Lower leg skin (tissue), 4 donors: ENCODE measurements at regions of chr6 and their contacts with region 1.

Region 1: DNA sequence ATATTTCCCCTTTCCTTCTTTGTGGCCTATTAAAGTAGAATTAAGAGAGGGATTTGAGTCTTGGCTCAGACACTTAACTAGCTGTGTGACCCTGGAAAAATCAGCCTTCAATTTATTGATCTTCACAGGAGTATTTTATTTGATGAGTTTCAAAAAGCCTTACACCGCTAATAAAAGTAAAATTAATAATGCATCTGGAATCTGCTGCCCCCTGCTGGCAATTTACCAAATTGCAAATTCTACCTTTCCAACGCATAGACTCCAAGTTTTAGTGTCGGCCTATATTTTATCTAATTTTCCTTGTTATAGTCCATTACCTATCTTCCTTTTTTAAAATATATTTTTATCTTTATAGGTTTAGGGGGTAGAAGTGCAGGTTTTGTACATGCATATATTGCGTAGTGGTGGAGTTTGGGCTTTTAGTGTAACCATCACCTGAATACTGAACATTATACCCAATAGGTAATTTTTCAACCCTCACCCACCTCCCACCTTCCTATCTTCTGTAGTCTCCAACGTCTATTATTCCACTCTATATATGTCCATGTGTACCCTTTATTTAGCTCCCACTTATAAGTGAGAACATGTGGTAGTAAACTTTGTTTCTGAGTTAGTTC is 46.3 kb downstream of the GOPC start:
- DNase-seq: peak; percentile 59 to 89
- H3K4me3 ChIP-seq: no peak overlapping the region
- CTCF ChIP-seq: peak in 1 of 3 donors; percentile 74
- POLR2A ChIP-seq: no peak

Region 2: DNA sequence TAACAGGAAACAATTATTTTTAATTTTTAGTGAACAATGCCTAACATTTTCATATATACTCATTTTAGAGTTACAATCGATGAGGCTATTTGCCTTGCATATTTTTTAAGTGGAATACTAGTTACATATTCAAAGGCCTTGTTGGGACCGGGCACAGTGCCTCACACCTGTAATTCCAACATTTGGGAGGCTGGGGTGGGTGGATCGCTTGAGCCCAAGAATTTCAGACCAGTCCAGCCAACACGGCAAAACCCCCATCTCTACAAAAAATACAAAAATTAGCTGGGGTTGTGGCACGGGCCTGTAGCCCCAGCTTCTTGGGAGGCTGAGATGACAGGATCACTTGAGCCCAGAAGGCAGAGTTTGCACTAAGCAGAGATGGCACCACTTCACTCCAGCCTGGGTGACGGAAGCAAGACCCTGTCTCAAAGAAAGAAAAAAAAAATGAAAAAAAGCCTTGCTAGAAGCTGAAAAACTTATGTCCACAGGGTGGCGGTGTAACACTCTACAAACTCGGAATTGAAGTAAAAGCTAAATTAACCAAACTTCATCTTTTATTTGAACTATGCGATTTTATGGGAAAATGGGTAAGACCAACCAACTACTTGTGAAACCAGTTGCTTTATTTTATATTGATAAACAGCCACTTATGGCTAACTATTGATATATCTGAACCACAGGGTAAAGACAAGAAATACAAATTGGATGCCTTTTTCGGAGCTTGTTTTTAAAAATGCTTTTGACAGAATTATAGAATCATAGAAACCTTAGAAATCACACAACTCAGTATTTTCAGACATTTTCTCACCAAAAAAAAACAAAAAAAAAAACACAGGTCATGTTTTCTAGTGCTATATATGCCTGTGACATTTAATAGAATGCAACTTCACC is 106.2 kb before region 1 on chr6:
- intact Hi-C with region 1: loop called (anchors 5 kb)
- DNase-seq: peak in 1 of 2 donors; percentile 28
- H3K4me3 ChIP-seq: no peak overlapping the region
- CTCF ChIP-seq: no peak
- POLR2A ChIP-seq: no peak

Region 3: DNA sequence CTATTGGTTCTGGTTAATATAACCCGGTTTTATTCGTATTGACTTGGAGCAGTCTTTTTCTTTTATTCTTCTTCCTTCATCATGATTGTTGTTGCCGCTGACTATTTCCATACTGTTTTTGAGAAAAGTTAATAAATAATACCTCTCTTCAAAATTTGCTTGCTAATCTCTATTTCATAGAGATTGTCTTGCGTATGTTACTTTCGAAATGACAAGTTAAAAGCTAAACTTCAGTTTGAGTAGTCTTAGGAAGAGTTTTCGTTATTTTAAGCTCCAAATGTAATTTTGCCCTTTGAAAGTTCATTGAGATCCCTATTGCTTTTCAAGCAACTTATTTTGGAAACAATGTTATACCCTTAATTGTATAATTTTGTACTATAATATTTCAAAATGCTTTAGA is 37.1 kb before region 1 on chr6:
- intact Hi-C with region 1: loop called (anchors 1 kb)
- DNase-seq: no peak
- H3K4me3 ChIP-seq: no peak overlapping the region
- CTCF ChIP-seq: no peak
- POLR2A ChIP-seq: no peak